ENCODE measurements at regions of chr13 and their contacts with region 1.

Region 1: GRCh38 chr13:46504036-46504435 is 48.9 kb upstream of the LRCH1 start:
- DNase-seq: no peak
- H3K4me3 ChIP-seq: no peak overlapping the region
- H3K27ac ChIP-seq: no peak overlapping the region
- H3K4me1 ChIP-seq: no peaks in the 10 kb centered on the region
- H3K27me3 ChIP-seq: no peaks in the 10 kb centered on the region
- CTCF ChIP-seq: no peak
- EP300 ChIP-seq: no peak
- POLR2A ChIP-seq: no peak

Region 2: DNA sequence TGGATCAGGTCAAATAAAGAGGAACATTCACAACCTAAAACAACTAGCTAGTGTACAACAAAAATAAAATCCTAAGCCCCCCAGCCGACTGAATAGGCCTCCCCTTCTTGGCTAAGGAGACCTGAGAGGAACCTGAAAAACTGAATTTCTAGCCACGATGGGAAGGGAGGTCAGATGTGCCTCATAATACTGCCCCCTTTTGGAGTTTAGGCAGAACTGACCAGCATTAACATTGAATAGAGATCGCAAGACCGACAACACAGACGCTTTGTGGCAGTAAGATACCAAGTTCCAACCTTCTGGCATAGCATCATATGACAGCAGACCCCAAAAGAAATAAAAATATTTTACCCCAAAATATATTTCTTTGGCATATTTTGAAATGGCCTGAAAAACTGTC is 786.0 kb before region 1 on chr13:
- intact Hi-C with region 1: no loop called
- DNase-seq: no peak
- H3K4me3 ChIP-seq: no peak overlapping the region
- H3K27ac ChIP-seq: no peak overlapping the region
- H3K4me1 ChIP-seq: no peaks in the 10 kb centered on the region
- H3K27me3 ChIP-seq: no peaks in the 10 kb centered on the region
- CTCF ChIP-seq: no peak
- EP300 ChIP-seq: no peak
- POLR2A ChIP-seq: no peak

Region 3: GRCh38 chr13:46535829-46536228 is 31.8 kb after region 1 on chr13:
- intact Hi-C with region 1: loop called (anchors 5 kb)
- DNase-seq: no peak
- H3K4me3 ChIP-seq: no peak overlapping the region
- H3K27ac ChIP-seq: no peak overlapping the region
- H3K4me1 ChIP-seq: peaks cover 0 to 12% (median 9%) of the 10 kb centered on the region in 4 donors
- H3K27me3 ChIP-seq: no peaks in the 10 kb centered on the region
- CTCF ChIP-seq: no peak
- EP300 ChIP-seq: no peak
- POLR2A ChIP-seq: no peak